Spleen (tissue), 13 donors: ENCODE measurements at regions of chr15 and their contacts with region 1.

Region 1: DNA sequence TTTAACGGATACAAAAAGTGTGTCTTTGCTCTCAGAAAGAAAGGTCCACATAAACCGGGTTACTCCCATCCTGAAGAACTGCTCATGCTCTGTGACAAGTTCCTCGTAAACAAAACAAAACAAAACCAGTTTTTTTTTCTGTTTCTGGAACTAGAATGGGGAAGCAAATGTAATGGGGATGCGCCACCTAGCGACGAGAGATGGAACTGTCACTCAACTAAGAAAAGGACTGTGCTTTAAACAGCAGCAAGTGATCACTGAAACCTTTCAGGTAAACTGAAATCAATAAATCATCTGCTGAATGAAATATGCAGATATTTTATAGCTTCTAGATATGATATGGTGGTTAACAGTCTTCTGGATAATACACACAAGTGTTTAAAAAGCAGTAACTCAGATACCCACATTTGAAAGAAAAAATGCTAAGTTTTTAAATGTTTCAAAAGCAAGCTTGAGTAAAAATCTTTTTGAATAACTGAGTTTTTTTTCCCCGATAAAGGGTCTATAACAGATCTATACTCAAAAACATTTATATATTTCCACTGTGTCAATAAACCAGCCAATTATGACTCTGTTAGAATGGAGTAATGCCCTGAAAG is 10.9 kb downstream of the TM2D3 start:
- DNase-seq: peak; percentile 84
- H3K4me3 ChIP-seq: peak overlapping the region in 2 of 8 donors; percentile 2 to 40
- H3K27ac ChIP-seq: peak overlapping the region; percentile 57 to 85 (median 80)
- H3K4me1 ChIP-seq: peaks cover 21 to 46% (median 31%) of the 10 kb centered on the region in 6 donors
- H3K27me3 ChIP-seq: no peaks in the 10 kb centered on the region
- CTCF ChIP-seq: peak; percentile 82 to 97 (median 90)
- POLR2A ChIP-seq: no peak

Region 2: DNA sequence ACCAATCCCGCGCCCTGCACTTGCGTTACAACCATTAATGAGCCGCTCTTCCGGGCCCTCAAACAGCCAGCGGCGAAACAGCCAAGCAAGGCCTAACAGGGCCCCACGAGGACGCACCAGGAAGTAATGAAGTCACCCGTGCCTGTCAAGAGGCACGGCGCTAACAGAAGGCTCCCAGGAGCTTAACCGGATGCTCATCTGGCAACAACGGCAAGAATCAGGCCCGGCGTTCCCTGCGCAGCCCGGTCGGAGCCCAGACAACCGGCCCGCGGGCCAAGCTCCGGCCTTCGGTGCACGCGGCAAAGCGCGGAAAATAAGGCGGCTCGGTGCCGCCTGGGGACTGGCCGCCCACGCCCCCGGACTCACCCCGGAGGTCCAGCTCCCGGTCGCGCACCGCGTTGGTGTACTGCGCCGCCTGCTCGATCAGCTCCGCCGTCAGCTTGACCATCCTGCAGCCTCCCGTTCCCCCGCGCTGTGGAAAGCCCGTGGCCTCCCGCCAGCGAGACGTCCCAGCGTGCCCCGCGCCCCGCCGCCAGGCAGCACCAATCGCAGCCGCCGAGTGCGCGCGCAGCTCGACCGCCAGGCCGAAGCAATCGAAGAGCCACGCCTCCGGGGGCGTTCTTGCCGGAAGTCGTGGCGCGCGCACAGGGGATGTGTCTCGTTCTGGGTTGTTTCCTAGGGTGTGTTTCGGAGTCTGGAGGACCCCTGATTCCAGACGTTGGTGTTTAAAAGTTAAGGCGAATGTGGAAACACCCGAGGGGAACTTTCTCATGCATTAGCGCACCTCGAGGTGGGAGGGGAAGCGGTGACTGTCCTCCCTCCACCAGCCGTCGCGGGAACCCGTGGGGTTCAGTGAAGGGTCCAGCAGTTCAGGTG is 346.3 kb before region 1 on chr15 and contains the start of gene SNRPA1:
- intact Hi-C with region 1: loop called (anchors 5 kb)
- DNase-seq: peak; percentile 100
- H3K4me3 ChIP-seq: peak within 1 kb of the TSS; percentile 80 to 100 (median 95)
- H3K27ac ChIP-seq: peak within 1 kb of the TSS; percentile 85 to 98 (median 96)
- H3K4me1 ChIP-seq: peaks cover 34 to 64% (median 43%) of the 10 kb centered on the region in 6 donors
- H3K27me3 ChIP-seq: no peaks in the 10 kb centered on the region
- CTCF ChIP-seq: peak in 2 of 11 experiments; percentile 9 to 39
- POLR2A ChIP-seq: peak; percentile 15 to 55 (median 35)
- total RNA-seq, gene SNRPA1: 56.2 to 85.4 (median 68.8) TPM